ENCODE measurements at regions of chr3 and their contacts with region 1.

Region 1: GRCh38 chr3:118884748-118885206 is 149.9 kb downstream of the IGSF11 start:
- DNase-seq: peak; percentile 40 to 63
- ATAC-seq: peak; percentile 88 to 92
- H3K4me3 ChIP-seq: no peak overlapping the region
- H3K27ac ChIP-seq: no peak overlapping the region
- H3K4me1 ChIP-seq: peaks cover 4% of the 10 kb centered on the region; the same call in 1 of the 3 replicates
- CTCF ChIP-seq: peak; percentile 100
- EP300 ChIP-seq: no peak
- POLR2A ChIP-seq: no peak
- RAD21 ChIP-seq: peak; percentile 69 to 94

Region 2: DNA sequence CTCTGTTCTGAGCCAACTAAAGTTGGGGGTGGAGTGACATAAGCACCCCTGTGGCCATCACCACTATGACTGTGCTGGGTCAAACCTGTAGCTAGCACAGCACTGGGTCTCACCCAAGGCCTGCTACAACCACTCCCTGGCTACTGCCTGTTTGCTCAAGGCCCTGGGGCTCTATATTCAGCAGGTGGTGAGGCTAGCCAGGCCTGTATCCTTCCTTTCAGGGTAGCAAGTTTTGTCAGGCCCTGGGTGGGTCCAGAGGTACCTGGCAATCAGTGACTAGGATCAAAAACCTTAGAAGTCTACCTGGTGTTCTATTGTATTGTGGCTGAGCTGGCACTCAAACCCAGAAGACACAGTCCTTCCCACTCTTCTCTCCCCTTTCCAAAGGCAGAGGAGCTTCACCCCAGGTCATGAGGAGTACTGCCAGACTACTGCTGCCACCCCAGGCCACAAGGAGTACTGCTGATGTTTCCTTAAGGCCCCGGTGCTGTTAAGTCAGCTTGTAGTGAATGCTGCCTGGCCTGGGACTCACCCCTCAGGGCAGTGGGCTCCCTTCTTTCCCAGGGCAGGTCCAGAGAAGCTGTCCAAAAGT is 20.9 kb before region 1 on chr3:
- CTCF ChIA-PET with region 1: interaction called, 10 read pairs
- POLR2A ChIA-PET with region 1: no interaction called
- DNase-seq: peak in 1 of 2 experiments; percentile 58
- ATAC-seq: peak; percentile 96 to 98
- H3K4me3 ChIP-seq: no peak overlapping the region
- H3K27ac ChIP-seq: no peak overlapping the region
- H3K4me1 ChIP-seq: no peaks in the 10 kb centered on the region
- CTCF ChIP-seq: peak; percentile 20; the same call in 1 of the 3 replicates
- EP300 ChIP-seq: no peak
- POLR2A ChIP-seq: no peak
- RAD21 ChIP-seq: peak in 1 of 2 experiments; percentile 39; a peak in 2 of 5 replicates

Region 3: DNA sequence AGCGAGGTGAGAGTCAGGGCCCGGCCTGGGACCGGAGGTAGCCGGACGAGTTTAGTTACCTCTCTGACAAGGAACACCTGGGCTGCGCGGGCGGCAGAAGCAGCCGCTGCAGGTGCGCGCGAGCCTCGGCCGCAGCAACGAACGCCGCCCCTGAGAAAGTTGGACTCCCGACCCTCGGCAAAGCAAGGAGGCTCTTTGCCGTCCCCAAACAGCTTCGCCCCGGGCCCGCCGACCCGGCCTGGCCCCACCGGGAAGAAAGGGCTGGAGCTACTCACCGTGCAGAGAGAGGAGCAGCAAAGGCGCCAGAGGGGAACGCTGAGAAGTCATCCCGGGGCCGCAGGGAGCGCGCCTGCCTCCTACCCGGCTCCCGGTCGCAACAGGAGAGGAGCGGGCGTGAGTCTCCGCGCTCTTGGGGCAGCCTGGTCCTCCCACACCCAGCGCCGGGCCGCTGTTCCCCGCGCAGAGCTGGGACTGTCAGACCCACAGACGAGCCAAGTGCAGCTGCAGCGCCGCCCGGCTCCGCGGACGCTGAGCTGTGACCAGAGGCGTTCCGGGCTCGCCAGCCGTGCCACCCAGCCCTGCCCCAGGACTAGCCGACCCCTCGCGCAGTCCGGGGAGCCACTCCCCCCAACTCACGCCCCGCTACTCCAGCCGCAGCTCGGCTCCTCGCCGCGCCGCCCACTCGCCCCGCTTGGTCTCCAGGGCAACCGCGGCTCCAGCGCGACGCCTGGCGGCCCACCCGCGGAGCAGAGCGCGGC is 149.7 kb after region 1 on chr3 and contains the start of gene IGSF11:
- CTCF ChIA-PET with region 1: interaction called, 207 read pairs
- POLR2A ChIA-PET with region 1: no interaction called
- DNase-seq: peak; percentile 75 to 82
- ATAC-seq: peak; percentile 93 to 97
- H3K4me3 ChIP-seq: peak within 1 kb of the TSS; percentile 73
- H3K27ac ChIP-seq: peak within 1 kb of the TSS; percentile 65 to 73
- H3K4me1 ChIP-seq: peaks cover 12% of the 10 kb centered on the region; the same call in 1 of the 3 replicates
- CTCF ChIP-seq: peak; percentile 83
- EP300 ChIP-seq: no peak
- POLR2A ChIP-seq: peak; percentile 56
- RAD21 ChIP-seq: peak; percentile 29 to 79; a peak in 4 of 5 replicates
- polyA plus RNA-seq, gene IGSF11: 21.7 and 22.2 TPM in 2 replicates

Region 4: GRCh38 chr3:119084371-119085072 is 199.7 kb after region 1 on chr3:
- CTCF ChIA-PET with region 1: interaction called, 321 read pairs
- POLR2A ChIA-PET with region 1: no interaction called
- DNase-seq: peak; percentile 32 to 70
- ATAC-seq: peak; percentile 91 to 97
- H3K4me3 ChIP-seq: no peak overlapping the region
- H3K27ac ChIP-seq: peak overlapping the region; percentile 3 to 44; a peak in 4 of 6 replicates
- H3K4me1 ChIP-seq: peaks cover 29% of the 10 kb centered on the region
- CTCF ChIP-seq: no peak
- EP300 ChIP-seq: no peak
- POLR2A ChIP-seq: no peak
- RAD21 ChIP-seq: no peak

Region 5: DNA sequence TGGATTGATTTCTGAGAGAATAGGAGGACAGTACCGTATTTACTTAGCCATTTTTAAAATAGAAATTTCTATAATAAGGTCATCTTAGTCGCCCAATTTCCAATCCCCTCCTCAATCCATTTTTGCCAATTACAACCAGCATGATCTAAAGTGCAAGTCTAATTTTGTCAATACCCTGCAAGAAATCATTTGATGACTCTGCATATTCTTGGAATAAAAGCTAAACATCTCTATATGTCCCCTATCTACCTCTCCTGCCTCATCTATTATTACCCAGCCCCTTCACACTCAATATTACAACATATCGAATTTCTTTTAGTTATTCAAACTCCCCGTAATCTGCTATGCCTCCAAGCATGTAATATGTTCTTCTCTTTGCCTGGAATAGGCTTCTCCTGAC is 219.3 kb after region 1 on chr3:
- CTCF ChIA-PET with region 1: interaction called, 321 read pairs
- POLR2A ChIA-PET with region 1: interaction called, 3 read pairs
- DNase-seq: no peak
- ATAC-seq: no peak
- H3K4me3 ChIP-seq: no peak overlapping the region
- H3K27ac ChIP-seq: no peak overlapping the region
- H3K4me1 ChIP-seq: 0 out of 3 replicates have a peak, but pooled peaks cover 8% of the 10 kb centered on the region
- CTCF ChIP-seq: no peak
- EP300 ChIP-seq: no peak
- POLR2A ChIP-seq: no peak
- RAD21 ChIP-seq: no peak

Region 6: DNA sequence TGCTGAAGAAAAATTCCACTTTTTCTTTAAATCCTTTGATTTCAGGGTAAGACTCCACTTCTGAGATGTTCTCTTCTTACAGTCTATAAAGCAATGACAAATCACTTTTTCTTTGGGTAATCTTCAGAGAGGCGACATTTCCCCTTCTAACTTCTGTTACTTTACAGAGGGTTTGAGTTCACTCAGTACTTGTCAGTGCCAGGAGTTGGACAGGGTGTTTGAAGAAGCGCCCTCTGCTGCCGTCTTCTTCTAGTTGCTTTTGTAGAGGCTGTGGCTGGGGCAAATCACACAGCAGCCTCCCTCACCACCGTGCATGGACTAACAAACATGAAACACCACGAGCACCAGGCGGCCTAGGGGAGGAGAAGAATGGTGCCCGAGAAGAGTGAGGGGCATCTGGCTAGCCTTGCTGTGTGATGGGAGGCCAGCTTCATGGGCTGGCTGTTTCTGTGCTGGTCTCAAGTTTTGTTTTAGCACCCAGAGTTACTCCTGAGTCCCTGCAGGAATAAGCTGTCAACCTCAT is 674.7 kb after region 1 on chr3 and contains the start of gene CD80:
- CTCF ChIA-PET with region 1: interaction called, 15 read pairs
- POLR2A ChIA-PET with region 1: no interaction called
- DNase-seq: peak; percentile 55 to 79
- ATAC-seq: peak; percentile 96 to 100
- H3K4me3 ChIP-seq: no peak within 1 kb of the TSS
- H3K27ac ChIP-seq: peak within 1 kb of the TSS in 1 of 2 experiments; percentile 26; a peak in 1 of 6 replicates
- H3K4me1 ChIP-seq: 0 out of 3 replicates have a peak, but pooled peaks cover 3% of the 10 kb centered on the region
- CTCF ChIP-seq: peak; percentile 64
- EP300 ChIP-seq: no peak
- POLR2A ChIP-seq: no peak
- RAD21 ChIP-seq: peak; percentile 56
- polyA plus RNA-seq, gene CD80: 0.08 TPM in 1 of 2 replicates, not detected in the other